Esophagus squamous epithelium (tissue), 5 donors: ENCODE measurements at regions of chr9 and their contacts with region 1.

Region 1: GRCh38 chr9:33081128-33081851 is 4.8 kb upstream of the SMU1 start:
- DNase-seq: no peak
- H3K4me3 ChIP-seq: peak overlapping the region in 3 of 4 donors; percentile 12 to 34 (median 25)
- H3K27ac ChIP-seq: peak overlapping the region; percentile 75 to 91 (median 84)
- H3K4me1 ChIP-seq: peaks cover 0 to 36% (median 14%) of the 10 kb centered on the region in 3 donors
- H3K27me3 ChIP-seq: no peaks in the 10 kb centered on the region
- CTCF ChIP-seq: peak; percentile 66 to 93 (median 89)
- POLR2A ChIP-seq: no peak

Region 2: GRCh38 chr9:32940740-32941139 is 140.6 kb before region 1 on chr9:
- intact Hi-C with region 1: no loop called
- DNase-seq: no peak
- H3K4me3 ChIP-seq: no peak overlapping the region
- H3K27ac ChIP-seq: no peak overlapping the region
- H3K4me1 ChIP-seq: no peaks in the 10 kb centered on the region
- H3K27me3 ChIP-seq: no peaks in the 10 kb centered on the region
- CTCF ChIP-seq: no peak
- POLR2A ChIP-seq: no peak

Region 3: DNA sequence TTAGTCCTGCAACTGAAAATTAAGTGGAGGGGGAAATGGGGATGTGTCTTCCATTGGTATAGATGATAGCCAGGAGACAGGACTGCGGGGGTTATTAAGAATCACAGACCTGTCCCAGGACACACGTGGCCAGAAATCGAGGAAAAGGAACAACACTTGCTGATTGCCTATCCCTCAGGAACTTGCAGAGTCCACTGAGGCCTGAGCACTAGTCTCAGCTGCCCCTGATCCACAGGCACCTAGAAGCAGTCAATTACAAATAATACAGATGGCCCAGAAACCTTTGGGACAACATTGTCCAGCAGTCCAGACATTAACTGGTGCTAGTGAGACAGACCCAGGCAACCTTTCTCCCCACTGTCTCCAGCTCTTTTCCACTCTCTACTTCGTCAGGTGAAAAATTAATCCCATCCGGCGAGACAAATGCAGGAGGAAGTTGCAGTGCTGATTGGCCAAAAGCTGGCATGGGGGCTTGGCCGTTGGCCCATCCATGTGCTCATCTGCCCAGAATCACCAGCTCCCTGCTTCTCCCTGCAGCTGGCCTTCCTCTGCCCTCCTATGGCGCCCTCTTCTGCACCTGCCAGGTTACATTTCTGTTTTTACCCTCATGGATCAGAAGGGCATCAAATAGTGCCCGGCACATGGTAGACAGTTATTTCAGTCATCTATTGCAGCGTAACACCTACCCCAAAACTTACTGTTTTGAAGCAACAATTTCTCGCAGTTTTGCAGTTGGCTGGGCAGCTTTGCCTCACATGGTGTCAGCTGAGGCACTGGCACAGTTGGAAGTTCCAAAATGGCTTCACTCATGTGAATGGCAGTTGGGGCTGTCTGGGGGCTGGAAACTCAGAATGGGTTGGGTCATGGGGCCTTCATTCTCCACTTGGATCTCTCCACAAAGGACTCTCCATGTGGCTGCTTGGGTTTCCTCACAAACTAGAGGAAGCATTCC is 89.5 kb after region 1 on chr9:
- intact Hi-C with region 1: loop called (anchors 10 kb)
- DNase-seq: no peak
- H3K4me3 ChIP-seq: no peak overlapping the region
- H3K27ac ChIP-seq: no peak overlapping the region
- H3K4me1 ChIP-seq: peaks cover 9 to 35% (median 11%) of the 10 kb centered on the region in 3 donors
- H3K27me3 ChIP-seq: no peaks in the 10 kb centered on the region
- CTCF ChIP-seq: peak in 5 of 6 experiments; percentile 31 to 67 (median 51)
- POLR2A ChIP-seq: no peak

Region 4: DNA sequence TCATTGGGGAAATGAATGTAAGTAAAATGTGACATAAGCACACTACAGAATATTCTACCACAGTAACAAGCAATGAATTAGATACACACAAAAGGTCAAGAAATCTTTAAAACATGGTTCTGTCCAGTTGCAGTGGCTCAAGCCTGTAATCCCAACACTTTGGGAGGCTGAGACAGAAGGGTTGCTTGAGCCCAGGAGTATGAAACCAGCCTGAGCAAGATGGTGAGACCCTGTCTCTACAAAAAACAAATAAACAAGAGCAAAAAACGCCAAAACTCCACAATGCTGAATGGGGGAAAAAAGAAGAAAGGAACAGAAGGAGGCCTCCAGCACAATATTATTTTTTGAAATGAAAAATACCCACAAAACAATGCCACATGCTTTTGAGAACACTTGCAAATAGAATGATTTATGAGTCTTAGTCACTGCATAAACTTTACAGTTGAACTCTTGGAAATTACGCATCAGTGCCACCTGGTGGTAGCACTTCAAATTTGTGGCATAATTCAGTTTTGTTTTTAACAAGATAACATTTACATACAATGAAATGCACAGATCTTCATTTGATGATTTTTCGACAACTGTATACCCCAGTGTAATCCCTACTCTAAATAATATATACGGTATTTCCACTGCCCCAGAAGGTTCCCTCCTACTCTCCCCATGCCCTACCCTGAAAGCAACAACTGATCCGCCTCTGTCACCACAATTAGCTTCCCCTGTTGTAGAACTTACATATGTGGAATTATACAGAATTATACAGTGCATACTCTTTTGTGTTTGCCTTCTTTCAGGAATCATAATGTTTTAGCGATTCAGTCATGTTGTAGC is 144.2 kb after region 1 on chr9:
- intact Hi-C with region 1: loop called (anchors 2 kb)
- DNase-seq: no peak
- H3K4me3 ChIP-seq: no peak overlapping the region
- H3K27ac ChIP-seq: peak overlapping the region; percentile 28 to 53 (median 41)
- H3K4me1 ChIP-seq: peaks cover 0 to 69% (median 25%) of the 10 kb centered on the region in 3 donors
- H3K27me3 ChIP-seq: no peaks in the 10 kb centered on the region
- CTCF ChIP-seq: peak; percentile 65 to 91 (median 84)
- POLR2A ChIP-seq: no peak